ENCODE measurements at regions of chr19 and their contacts with region 1.

Region 1: DNA sequence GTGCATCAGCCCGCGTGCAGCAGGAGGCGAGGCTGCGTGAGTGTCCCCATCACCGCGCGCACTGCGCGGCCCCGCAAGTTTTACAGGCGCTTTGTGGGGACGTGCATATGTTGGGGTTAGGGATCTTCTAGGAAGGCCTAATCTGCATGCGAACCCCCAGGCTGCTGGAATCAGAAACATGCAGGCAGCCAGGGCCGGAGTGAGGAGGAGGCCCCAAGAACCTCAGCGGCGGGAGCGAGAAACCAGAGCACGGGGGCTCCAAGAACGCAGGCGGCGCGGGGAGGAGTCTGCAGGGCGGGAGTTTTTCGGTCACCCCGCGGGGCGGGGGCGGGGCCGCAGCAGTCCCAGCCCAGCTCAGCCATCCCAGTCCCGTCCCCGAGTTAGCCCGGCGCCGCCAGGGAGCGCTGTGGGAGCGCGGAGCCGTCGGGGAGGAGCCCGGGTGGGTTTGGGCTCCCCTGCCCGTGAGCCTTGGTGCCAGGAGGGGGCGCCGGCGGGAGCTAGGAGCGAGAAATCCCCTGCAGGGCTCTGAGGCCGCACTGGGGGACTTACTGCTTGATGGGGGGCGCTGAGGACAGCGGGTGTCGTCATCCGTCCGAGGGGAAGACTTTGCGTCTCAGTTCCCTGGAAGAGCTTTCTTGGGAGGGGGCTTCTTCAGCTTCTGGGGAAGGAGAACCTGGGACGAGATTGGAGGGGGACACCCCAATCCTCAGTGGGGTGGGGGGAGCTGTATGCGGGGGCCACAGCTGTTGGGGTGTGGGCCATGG is 933 bp upstream of the NRTN start:
- H3K4me3 ChIP-seq: peak overlapping the region; percentile 25
- H3K27ac ChIP-seq: no peak overlapping the region
- H3K4me1 ChIP-seq: peaks cover 3% of the 10 kb centered on the region; the same call in 1 of the 2 replicates
- CTCF ChIP-seq: peak; percentile 99

Region 2: DNA sequence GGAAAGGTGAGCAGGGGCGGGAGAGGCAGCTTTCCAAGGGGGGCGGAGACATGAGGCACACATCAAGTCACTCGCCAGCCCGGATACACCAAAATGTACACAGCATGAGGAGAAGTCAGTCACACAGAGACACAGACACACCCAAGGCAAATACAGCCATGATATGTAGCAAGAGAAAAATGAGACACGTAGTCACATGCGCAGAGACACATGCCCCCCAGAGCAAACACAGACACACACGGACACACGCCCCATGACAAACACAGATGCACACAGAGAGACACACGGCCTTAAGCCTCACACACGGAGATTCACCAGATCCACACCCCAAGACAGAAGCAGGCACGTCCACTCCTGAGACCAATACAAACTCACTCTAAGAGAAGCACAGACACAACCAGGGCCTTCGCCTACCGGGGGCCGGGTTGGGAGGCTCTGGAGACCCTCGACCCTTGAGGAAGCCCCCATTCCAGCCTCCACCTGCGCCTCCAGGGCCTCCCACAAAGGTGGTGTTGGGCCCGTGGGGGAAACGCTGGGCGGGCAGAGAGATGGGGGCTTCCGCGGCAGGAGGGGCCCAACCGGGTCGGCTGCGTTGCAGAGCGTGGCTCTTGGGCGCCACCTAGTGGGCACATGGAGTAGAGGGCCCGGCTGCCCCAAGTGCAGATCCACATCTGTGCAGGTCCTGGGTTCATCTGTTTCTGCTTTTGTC is 226.0 kb before region 1 on chr19:
- CTCF ChIA-PET with region 1: no interaction called
- POLR2A ChIA-PET with region 1: no interaction called
- H3K4me3 ChIP-seq: no peak overlapping the region; the same call in 1 of the 2 replicates
- H3K27ac ChIP-seq: no peak overlapping the region
- H3K4me1 ChIP-seq: peaks cover 6% of the 10 kb centered on the region; the same call in 1 of the 2 replicates
- CTCF ChIP-seq: peak; percentile 93

Region 3: DNA sequence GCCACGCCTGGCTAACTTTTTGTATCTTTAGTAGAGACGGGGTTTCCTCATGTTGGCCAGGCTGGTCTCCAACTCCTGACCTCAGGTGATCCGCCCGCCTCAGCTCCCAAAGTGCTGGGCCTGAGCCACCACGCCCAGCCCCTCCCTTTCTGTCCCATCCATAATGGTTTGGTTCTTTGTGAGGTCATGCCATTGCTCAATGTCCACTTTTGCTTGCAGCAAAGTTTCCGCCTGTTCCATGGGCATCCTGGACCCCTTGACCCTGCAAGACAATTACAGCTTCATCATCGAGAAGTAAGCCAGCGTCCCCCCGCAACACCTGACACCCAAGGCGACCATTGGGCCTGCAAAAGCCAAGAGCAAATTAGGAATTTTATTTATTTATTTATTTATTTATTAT is 36.0 kb before region 1 on chr19:
- CTCF ChIA-PET with region 1: interaction called, 23 read pairs
- POLR2A ChIA-PET with region 1: interaction called, 3 read pairs
- H3K4me3 ChIP-seq: no peak overlapping the region
- H3K27ac ChIP-seq: no peak overlapping the region
- H3K4me1 ChIP-seq: no peaks in the 10 kb centered on the region
- CTCF ChIP-seq: no peak

Region 4: DNA sequence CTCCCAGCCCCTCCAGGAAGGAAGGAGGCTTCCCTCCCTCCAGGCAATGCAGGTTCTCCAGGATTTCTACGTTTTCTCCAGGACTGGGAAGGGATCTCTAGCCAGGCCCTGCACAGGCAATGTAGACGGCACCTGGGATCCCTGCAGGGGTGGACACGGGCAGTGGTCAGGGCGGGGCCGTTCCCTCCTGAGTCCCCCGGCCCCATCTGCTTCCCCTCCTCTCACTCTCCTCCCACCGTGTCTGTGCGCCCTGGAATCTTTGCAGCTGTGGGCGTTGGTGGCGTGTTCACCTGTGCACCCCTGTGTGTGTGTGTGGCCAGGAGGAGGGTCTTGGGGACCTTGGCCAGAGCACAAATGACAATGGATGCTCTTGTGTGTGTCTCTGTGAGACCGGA is 10.9 kb after region 1 on chr19:
- CTCF ChIA-PET with region 1: interaction called, 19 read pairs
- POLR2A ChIA-PET with region 1: no interaction called
- H3K4me3 ChIP-seq: no peak overlapping the region
- H3K27ac ChIP-seq: no peak overlapping the region
- H3K4me1 ChIP-seq: no peaks in the 10 kb centered on the region
- CTCF ChIP-seq: no peak

Region 5: GRCh38 chr19:5891938-5892771 is 88.2 kb after region 1 on chr19:
- CTCF ChIA-PET with region 1: interaction called, 65 read pairs
- POLR2A ChIA-PET with region 1: interaction called, 19 read pairs
- H3K4me3 ChIP-seq: no peak overlapping the region
- H3K27ac ChIP-seq: no peak overlapping the region
- H3K4me1 ChIP-seq: no peaks in the 10 kb centered on the region; the same call in 1 of the 2 replicates
- CTCF ChIP-seq: peak; percentile 91

Region 6: DNA sequence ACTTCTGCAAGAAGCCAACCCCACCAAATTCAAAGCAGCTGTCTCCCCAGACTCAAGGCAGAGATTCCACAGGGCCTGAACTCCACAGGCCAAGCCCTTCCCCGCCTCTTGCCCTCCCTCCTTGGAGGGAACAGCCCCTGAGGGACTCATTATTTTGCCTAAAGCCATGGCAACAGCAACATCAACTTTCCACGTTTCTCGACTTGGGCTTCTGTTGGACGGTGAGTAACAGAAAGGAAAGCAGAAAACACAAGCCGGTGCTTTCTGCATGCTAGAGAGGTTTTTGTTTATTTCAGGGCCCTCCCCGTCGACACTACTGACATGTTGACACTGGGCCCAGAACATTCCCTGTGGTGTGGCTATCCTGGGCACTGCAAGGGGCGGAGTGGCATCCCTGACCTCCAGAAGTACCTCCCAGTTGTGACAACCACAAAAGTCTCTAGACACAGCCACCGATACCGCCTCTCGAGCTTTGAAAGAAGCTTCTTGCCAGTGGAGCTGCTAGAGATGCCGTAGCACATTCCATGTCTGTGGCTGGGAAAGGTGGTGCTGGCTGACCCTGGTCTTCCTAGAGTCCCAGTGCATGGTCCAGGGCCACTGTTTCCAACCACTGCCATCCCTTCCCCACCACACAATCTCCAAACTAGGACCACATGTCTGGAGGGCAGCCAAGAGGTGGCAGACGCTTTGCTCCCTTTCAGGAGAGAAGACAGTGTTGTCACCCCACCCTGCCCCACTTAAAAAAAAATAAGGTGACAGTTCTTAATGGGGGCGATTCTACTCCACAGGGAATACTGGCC is 122.9 kb after region 1 on chr19:
- CTCF ChIA-PET with region 1: no interaction called
- POLR2A ChIA-PET with region 1: no interaction called
- H3K4me3 ChIP-seq: no peak overlapping the region
- H3K27ac ChIP-seq: no peak overlapping the region
- H3K4me1 ChIP-seq: no peaks in the 10 kb centered on the region
- CTCF ChIP-seq: no peak

Region 7: DNA sequence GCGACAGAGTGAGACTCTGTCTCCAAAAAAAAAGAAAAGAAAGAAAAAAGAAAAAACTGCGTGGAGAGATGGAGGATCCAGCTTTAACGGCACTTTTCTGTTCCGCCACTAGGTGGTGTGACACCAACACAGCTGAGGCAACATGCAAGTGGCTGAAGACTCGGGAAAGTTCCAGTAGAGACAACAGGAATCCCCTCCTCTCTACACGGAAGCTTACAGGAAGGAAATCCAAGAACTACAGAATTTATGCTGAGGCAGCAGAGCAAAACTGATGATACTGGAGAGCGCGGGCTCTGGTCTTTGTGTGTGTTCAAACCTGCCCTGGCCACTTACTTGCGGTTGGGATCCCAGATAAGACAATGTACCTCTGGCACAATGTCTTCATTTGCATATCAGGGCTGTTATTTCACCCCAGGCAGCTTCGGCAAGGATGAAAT is 164.1 kb after region 1 on chr19:
- CTCF ChIA-PET with region 1: interaction called, 13 read pairs
- POLR2A ChIA-PET with region 1: interaction called, 3 read pairs
- H3K4me3 ChIP-seq: no peak overlapping the region
- H3K27ac ChIP-seq: peak overlapping the region; percentile 52
- H3K4me1 ChIP-seq: peaks cover 9% of the 10 kb centered on the region
- CTCF ChIP-seq: peak; percentile 74; the same call in 1 of the 2 replicates

Region 8: GRCh38 chr19:6021878-6022569 is 218.1 kb after region 1 on chr19:
- CTCF ChIA-PET with region 1: interaction called, 71 read pairs
- POLR2A ChIA-PET with region 1: interaction called, 4 read pairs
- H3K4me3 ChIP-seq: no peak overlapping the region
- H3K27ac ChIP-seq: no peak overlapping the region
- H3K4me1 ChIP-seq: no peaks in the 10 kb centered on the region
- CTCF ChIP-seq: peak; percentile 84; the same call in 1 of the 2 replicates

Measured in HEK293 (cell line).